Astrocyte of the cerebellum (primary cell): ENCODE measurements at regions of chr6 and their contacts with region 1.

Region 1: DNA sequence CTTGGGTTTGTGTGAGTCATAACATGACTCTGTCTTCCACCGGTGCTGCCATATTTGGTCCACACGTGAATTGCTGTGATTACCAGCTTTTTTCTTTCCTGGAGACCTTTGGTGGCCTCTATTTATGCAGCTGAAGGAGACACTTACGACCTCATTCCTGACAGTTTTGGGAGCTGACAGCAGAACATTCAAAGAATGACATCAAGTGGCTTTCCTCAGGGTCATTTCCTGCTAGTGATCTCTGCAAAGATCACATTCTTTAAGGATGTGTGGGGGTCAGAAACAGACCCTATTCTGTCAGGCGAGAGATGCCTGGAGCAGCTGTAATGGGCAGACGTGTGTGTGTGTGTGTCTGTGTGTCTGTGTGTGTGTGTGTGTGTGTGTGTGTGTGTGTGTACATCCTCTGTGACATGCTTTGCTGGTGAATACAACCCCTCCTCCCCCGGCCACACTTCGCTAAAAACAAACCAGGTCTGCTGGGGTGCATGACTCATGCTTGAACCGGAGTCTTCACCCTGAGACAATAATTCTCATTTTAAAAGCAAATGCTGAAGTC is 115.6 kb downstream of the TMEM170B start:
- DNase-seq: peak; percentile 74
- H3K4me3 ChIP-seq: no peak overlapping the region
- CTCF ChIP-seq: no peak

Region 2: DNA sequence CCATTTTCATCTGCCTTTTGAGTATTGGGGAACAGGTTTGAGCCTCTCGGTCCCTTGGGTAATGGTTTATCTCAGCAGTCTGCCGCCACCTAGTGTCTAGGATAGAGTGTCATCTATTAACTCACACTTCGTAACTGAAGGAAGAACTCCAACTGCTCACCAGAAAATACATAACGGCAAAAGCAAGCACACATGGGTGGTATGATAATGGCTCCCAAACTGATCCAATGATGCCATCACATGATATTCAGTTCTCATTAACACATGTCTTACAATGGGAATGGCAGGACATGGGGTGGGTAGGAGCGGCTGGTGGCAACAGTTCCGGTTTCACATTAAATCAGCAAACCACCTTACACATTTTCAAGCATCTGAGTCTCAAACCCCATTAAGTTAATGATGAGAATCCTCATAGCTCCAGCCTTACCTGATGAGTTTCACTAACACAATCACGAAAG is 952.8 kb after region 1 on chr6:
- in situ Hi-C with region 1: loop called (anchors 25 kb)
- DNase-seq: peak; percentile 43
- H3K4me3 ChIP-seq: no peak overlapping the region
- CTCF ChIP-seq: peak; percentile 72